ENCODE measurements at regions of chr12 and their contacts with region 1.

Region 1: GRCh38 chr12:43882578-43883178 is 46.8 kb downstream of the TMEM117 start:
- DNase-seq: no peak
- ATAC-seq: peak in 5 of 8 donors; percentile 52 to 70 (median 64)
- H3K4me3 ChIP-seq: no peak overlapping the region
- H3K27ac ChIP-seq: no peak overlapping the region
- H3K4me1 ChIP-seq: peaks cover 0 to 11% (median 0%) of the 10 kb centered on the region in 9 donors
- H3K27me3 ChIP-seq: no peaks in the 10 kb centered on the region
- CTCF ChIP-seq: peak; percentile 34 to 90 (median 79)

Region 2: GRCh38 chr12:43444940-43445564 is 437.6 kb before region 1 on chr12:
- intact Hi-C with region 1: loop called in 8 of 10 experiments (anchors 5 to 10 kb)
- DNase-seq: peak in 1 of 2 donors; percentile 29
- ATAC-seq: no peak
- H3K4me3 ChIP-seq: no peak overlapping the region
- H3K27ac ChIP-seq: no peak overlapping the region
- H3K4me1 ChIP-seq: no peaks in the 10 kb centered on the region
- H3K27me3 ChIP-seq: peaks cover 0 to 3% (median 0%) of the 10 kb centered on the region in 7 donors
- CTCF ChIP-seq: peak; percentile 19 to 78 (median 68)

Region 3: GRCh38 chr12:43776498-43776897 is 106.2 kb before region 1 on chr12:
- intact Hi-C with region 1: loop called in 5 of 10 experiments (anchors 5 to 10 kb)
- DNase-seq: no peak
- ATAC-seq: no peak
- H3K4me3 ChIP-seq: no peak overlapping the region
- H3K27ac ChIP-seq: no peak overlapping the region
- H3K4me1 ChIP-seq: no peaks in the 10 kb centered on the region
- H3K27me3 ChIP-seq: no peaks in the 10 kb centered on the region
- CTCF ChIP-seq: peak in 7 of 9 donors; percentile 22 to 50 (median 31)

Region 4: DNA sequence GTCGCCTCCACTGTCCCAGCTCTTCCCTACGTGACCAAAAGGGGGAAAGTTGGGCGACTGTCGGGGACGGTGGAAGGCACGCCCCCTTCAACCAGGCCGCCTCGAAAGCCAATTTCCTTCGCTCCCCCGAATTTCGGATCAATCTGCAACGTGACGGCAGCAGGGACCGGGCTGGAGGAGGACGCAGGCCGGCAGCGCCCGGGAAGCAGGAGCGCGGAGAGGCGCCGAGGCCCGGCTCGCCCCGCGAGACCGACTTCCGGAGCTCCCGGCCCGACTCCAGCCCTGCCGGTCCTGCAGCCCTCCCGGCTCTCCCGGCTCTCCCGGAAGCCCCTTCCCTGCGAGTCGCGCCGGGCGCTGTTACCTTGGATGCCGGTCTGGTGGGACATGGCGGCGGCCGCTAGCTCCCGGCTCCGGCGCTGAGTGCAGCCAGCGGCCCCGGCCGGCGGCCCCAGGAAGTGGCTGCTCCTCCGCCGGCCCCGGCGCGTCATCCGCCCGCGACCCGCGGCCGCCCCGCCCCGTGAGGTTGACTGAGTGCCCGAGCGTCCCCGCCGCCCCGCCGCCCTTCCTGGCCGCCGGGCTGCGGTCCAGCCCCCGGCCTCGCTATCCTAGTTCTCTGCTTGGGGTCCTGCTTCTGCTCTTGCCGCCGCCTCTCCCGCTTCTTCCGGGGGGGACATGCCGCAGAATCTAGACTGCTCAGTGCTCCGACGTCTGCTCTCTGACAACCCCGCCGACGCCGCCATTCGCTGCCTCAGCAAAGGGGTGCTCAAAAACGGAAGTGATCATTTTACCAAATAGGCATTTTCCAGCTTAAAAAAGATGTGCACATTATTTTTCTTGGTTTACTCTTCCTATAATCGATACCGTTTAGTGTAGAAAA is 76.6 kb before region 1 on chr12 and contains the start of gene TWF1:
- intact Hi-C with region 1: loop called in 6 of 10 experiments (anchors 2 to 10 kb)
- DNase-seq: peak; percentile 88 to 91
- ATAC-seq: peak; percentile 99 to 100 (median 100)
- H3K4me3 ChIP-seq: peak within 1 kb of the TSS; percentile 74 to 97 (median 93)
- H3K27ac ChIP-seq: peak within 1 kb of the TSS; percentile 83 to 99 (median 96)
- H3K4me1 ChIP-seq: peaks cover 0 to 46% (median 24%) of the 10 kb centered on the region in 9 donors
- H3K27me3 ChIP-seq: no peaks in the 10 kb centered on the region
- CTCF ChIP-seq: peak in 6 of 9 donors; percentile 20 to 48 (median 33)
- total RNA-seq, gene TWF1: 8.5 to 21.7 (median 10.7) TPM

Region 5: GRCh38 chr12:43861015-43861839 is 21.5 kb before region 1 on chr12:
- intact Hi-C with region 1: loop called in 1 of 10 experiments (anchors 2 kb)
- DNase-seq: no peak
- ATAC-seq: no peak
- H3K4me3 ChIP-seq: no peak overlapping the region
- H3K27ac ChIP-seq: peak overlapping the region in 1 of 10 donors; percentile 35
- H3K4me1 ChIP-seq: peaks cover 0 to 15% (median 0%) of the 10 kb centered on the region in 9 donors
- H3K27me3 ChIP-seq: no peaks in the 10 kb centered on the region
- CTCF ChIP-seq: no peak

Region 6: GRCh38 chr12:44053550-44054243 is 171.0 kb after region 1 on chr12:
- intact Hi-C with region 1: no loop called
- DNase-seq: peak in 1 of 2 donors; percentile 23
- ATAC-seq: peak in 7 of 8 donors; percentile 38 to 84 (median 65)
- H3K4me3 ChIP-seq: no peak overlapping the region
- H3K27ac ChIP-seq: peak overlapping the region in 1 of 10 donors; percentile 6
- H3K4me1 ChIP-seq: peaks cover 0 to 20% (median 4%) of the 10 kb centered on the region in 9 donors
- H3K27me3 ChIP-seq: no peaks in the 10 kb centered on the region
- CTCF ChIP-seq: no peak

Measured in heart right ventricle (tissue), 16 donors.